Activated CD8-positive, alpha-beta T cell treated with anti-CD3 and anti-CD28 coated beads for 36 hours (primary cell): ENCODE measurements at regions of chr1 and their contacts with region 1.

Region 1: DNA sequence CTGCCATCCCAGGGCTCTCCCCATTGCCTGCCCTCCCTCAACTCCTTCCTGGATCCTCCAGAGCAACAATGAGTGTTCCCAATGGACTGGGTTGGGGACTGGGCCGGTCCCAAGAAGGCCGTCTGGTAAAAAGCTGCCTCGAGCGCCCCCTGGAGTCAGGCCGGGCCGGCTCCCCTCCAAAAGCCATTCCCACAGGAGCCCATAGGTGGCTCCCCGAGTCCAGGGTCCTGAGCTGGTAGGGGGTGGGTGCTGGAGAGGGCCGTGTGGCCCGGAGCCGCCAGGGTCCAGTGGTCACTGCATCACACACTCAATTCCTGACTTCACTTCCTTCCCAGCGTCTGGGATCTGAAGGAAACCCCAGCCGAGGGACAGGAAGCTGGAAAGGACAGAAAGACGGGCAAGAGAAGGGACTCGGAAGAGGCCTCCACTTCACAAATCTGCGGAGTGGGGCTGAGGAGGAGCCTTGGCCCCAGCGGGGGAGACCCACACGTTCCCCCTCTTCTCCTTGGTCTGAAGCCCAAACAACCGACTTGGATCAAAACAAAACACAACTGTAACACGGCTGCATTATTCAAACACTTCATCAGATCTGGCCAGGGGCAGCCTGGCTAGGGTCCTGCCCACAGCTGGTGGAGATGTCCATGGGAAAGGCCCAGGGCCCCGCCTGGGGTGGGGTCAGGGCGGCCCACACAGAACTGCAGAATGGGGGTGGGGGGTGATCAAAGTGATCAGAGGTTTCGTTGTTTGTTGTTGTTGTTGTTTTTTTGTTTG is 10.9 kb upstream of the ALDH4A1 start:
- DNase-seq: peak; percentile 83
- ATAC-seq: peak; percentile 92
- H3K4me3 Mint-ChIP-seq: no peak overlapping the region
- H3K27ac Mint-ChIP-seq: peak overlapping the region; percentile 76
- H3K4me1 Mint-ChIP-seq: peaks cover 23% of the 10 kb centered on the region
- H3K27me3 Mint-ChIP-seq: no peaks in the 10 kb centered on the region
- CTCF ChIP-seq: peak; percentile 98

Region 2: DNA sequence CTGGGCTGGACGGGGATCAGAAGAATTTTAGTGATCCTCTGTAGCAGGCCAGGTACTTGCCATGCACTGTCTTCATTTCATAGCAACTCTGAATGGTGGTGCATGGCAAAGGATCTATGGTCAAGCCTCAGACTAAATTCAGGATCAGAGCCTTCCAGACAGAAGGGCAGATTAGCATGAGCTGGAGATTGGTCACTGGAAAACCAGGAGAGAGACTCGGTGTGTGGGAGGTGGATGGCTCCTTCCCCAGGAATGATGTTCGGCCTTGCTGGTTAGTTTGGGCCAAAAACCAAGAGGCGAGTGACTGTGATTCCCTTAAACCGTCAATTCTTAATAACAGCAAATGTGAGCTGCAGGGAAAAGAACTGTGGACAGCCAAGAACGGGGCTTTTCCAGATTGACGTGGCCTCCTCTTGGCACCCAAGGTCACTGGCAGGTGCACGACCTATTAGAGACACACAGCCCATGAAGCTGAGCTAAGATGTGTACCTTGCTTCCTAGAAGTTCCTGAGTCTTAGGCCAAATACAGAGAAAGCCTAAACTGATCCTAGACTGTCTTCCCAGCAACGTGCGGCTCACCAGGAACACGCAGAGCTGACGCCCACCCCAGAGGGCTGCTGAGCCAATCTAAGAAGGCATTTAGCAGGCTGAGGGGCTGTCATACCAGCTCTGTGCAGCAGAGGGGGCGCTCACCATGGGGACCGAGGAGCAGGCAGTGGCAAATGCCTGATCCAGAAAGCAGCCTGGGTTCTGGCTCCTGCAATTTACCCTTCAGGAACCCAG is 29.4 kb before region 1 on chr1:
- CTCF ChIA-PET with region 1: interaction called, 20 read pairs
- POLR2A ChIA-PET with region 1: no interaction called
- intact Hi-C with region 1: no loop called
- DNase-seq: peak; percentile 86
- ATAC-seq: peak; percentile 95
- H3K4me3 Mint-ChIP-seq: no peak overlapping the region
- H3K27ac Mint-ChIP-seq: no peak overlapping the region
- H3K4me1 Mint-ChIP-seq: no peaks in the 10 kb centered on the region
- H3K27me3 Mint-ChIP-seq: no peaks in the 10 kb centered on the region
- CTCF ChIP-seq: peak; percentile 90

Region 3: GRCh38 chr1:18941221-18942141 is 28.2 kb after region 1 on chr1:
- CTCF ChIA-PET with region 1: interaction called, 26 read pairs
- POLR2A ChIA-PET with region 1: interaction called, 3 read pairs
- intact Hi-C with region 1: no loop called
- DNase-seq: no peak
- ATAC-seq: no peak
- H3K4me3 Mint-ChIP-seq: no peak overlapping the region
- H3K27ac Mint-ChIP-seq: no peak overlapping the region
- H3K4me1 Mint-ChIP-seq: peaks cover 56% of the 10 kb centered on the region
- H3K27me3 Mint-ChIP-seq: no peaks in the 10 kb centered on the region
- CTCF ChIP-seq: no peak

Region 4: GRCh38 chr1:18956369-18957135 is 43.3 kb after region 1 on chr1 and contains the start of gene IFFO2:
- CTCF ChIA-PET with region 1: interaction called, 45 read pairs
- POLR2A ChIA-PET with region 1: interaction called, 4 read pairs
- intact Hi-C with region 1: loop called (anchors 5 kb)
- DNase-seq: peak; percentile 98
- ATAC-seq: peak; percentile 88
- H3K4me3 Mint-ChIP-seq: peak within 1 kb of the TSS; percentile 82
- H3K27ac Mint-ChIP-seq: peak within 1 kb of the TSS; percentile 85
- H3K4me1 Mint-ChIP-seq: peaks cover 55% of the 10 kb centered on the region
- H3K27me3 Mint-ChIP-seq: no peaks in the 10 kb centered on the region
- CTCF ChIP-seq: no peak
- total RNA-seq, gene IFFO2: 23.7 to 26.4 TPM

Region 5: DNA sequence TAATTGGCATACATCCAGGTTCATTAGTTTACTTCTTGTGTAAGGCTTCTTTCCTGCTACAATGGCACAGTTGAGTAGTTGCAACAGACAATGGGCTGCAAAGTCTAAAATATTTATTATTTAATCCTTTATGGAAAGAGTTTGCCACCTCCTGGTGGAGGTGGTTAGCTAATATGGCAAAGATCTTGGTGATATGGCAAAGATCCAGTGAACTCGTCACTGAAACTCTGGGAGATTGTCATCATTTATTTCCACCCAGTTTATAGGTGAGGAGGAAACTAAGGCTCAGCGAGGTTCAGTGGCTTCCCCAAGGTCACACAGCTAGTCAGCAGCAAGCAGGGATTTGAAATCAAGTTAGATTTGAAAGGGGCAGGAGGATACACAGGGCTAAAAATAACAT is 59.3 kb after region 1 on chr1:
- CTCF ChIA-PET with region 1: interaction called, 23 read pairs
- POLR2A ChIA-PET with region 1: no interaction called
- intact Hi-C with region 1: no loop called
- DNase-seq: peak; percentile 35
- ATAC-seq: peak; percentile 55
- H3K4me3 Mint-ChIP-seq: no peak overlapping the region
- H3K27ac Mint-ChIP-seq: no peak overlapping the region
- H3K4me1 Mint-ChIP-seq: peaks cover 11% of the 10 kb centered on the region
- H3K27me3 Mint-ChIP-seq: no peaks in the 10 kb centered on the region
- CTCF ChIP-seq: no peak

Region 6: GRCh38 chr1:19113697-19114092 is 200.4 kb after region 1 on chr1:
- CTCF ChIA-PET with region 1: interaction called, 20 read pairs
- POLR2A ChIA-PET with region 1: no interaction called
- intact Hi-C with region 1: no loop called
- DNase-seq: peak; percentile 61
- ATAC-seq: peak; percentile 83
- H3K4me3 Mint-ChIP-seq: no peak overlapping the region
- H3K27ac Mint-ChIP-seq: no peak overlapping the region
- H3K4me1 Mint-ChIP-seq: no peaks in the 10 kb centered on the region
- H3K27me3 Mint-ChIP-seq: no peaks in the 10 kb centered on the region
- CTCF ChIP-seq: peak; percentile 40